ENCODE measurements at regions of chr1 and their contacts with region 1.

Region 1: GRCh38 chr1:235415008-235415904 is 48.0 kb downstream of the TBCE start:
- DNase-seq: peak; percentile 74
- ATAC-seq: peak; percentile 53
- H3K4me3 Mint-ChIP-seq: no peak overlapping the region
- H3K27ac Mint-ChIP-seq: no peak overlapping the region
- H3K4me1 Mint-ChIP-seq: peaks cover 9% of the 10 kb centered on the region
- H3K27me3 Mint-ChIP-seq: no peaks in the 10 kb centered on the region

Region 2: DNA sequence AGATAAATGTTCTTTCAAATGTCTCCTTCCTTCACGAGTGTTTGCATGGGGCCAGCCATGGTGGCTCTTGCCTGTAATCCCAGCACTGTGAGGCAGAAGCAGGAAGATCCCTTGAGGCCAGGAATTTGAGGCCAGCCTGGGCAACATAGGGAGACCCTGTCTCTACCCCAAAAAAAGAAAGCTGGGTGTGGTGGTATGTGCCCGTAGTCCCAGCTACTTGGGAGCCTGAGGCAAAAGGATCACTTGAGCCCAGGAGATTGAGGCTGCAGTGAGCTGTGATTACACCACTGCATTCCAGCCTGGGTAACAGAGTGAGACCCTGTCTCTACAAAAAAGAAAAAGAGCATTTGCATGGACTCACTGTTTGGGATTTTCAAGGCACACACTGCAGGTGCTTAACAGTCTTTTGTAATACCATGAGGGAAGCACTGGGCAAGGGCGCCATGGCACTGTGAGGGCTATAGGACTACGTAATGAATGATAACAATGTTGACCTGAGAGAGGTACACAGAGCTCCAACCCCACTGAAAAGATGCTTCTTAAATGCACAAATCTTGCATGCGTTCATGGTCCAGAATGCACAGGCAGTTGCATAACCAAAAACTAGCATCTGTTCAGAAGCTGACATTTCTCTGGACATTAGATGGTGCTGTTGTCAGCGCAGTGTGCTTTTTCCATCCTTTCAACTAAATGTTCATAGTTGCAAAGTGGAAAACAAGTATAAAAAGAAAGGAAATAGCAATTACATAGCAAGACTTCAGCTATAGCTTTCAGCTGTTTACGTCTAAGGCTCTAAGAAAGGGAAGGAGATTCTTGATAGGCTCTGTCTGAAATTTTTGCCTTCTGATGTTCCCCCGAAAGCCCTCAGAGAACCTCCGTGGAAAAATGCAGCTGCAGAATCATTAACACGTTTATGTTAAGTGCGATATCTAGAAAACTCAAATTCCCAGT is 928.5 kb before region 1 on chr1:
- CTCF ChIA-PET with region 1: interaction called, 12 read pairs
- POLR2A ChIA-PET with region 1: no interaction called
- DNase-seq: peak; percentile 59
- ATAC-seq: peak; percentile 66
- H3K4me3 Mint-ChIP-seq: no peak overlapping the region
- H3K27ac Mint-ChIP-seq: no peak overlapping the region
- H3K4me1 Mint-ChIP-seq: peaks cover 31% of the 10 kb centered on the region
- H3K27me3 Mint-ChIP-seq: peaks cover 20% of the 10 kb centered on the region

Region 3: DNA sequence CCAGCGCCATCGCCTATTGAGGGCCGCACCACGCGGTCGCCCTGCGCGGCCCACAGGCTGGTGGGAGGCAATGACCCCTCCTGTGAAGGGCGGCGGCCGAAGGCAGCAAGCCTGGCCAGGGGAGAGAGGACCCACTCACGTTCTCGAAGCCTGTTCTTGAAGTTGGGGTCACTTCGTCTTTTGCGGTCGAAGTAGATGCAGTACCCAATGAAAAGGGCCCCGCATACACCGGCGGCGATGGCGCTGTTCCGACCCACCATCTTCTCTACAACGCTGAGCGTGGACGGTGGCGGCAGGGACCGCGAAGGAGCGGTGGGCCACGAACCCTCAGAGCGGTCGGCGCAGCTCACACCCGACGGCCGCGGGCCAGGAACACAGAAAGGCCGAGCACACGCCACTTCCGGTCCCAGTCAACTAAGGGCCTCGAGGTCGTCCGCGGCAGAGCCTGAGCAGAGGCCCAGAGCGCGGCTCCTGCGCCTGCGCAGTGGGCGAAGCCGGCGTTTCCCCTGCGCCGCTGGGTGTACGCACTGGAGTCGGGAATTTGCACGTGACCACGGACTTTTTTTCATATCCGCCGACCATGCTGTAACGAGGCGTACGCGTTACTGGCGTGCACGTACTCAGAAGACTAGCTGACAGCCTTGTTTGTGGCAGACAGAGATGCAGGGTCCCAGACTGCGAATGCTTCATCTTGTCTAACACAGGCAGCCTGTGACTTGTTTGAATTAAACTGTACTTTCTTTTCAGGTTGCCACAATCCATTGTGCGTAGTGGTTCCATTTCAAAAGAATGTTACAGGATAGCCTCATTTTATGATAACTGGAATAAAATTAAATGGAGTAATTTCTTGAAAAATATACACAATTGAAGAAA is 286.6 kb before region 1 on chr1 and contains the start of gene TOMM20:
- CTCF ChIA-PET with region 1: interaction called, 18 read pairs
- POLR2A ChIA-PET with region 1: no interaction called
- DNase-seq: peak; percentile 95
- ATAC-seq: peak; percentile 97
- H3K4me3 Mint-ChIP-seq: peak within 1 kb of the TSS; percentile 85
- H3K27ac Mint-ChIP-seq: peak within 1 kb of the TSS; percentile 99
- H3K4me1 Mint-ChIP-seq: peaks cover 36% of the 10 kb centered on the region
- H3K27me3 Mint-ChIP-seq: no peaks in the 10 kb centered on the region
- total RNA-seq, gene TOMM20: 72.2 to 81.7 TPM

Region 4: GRCh38 chr1:235199441-235199840 is 215.8 kb before region 1 on chr1:
- CTCF ChIA-PET with region 1: interaction called, 10 read pairs
- POLR2A ChIA-PET with region 1: no interaction called
- DNase-seq: no peak
- ATAC-seq: no peak
- H3K4me3 Mint-ChIP-seq: no peak overlapping the region
- H3K27ac Mint-ChIP-seq: no peak overlapping the region
- H3K4me1 Mint-ChIP-seq: peaks cover 2% of the 10 kb centered on the region
- H3K27me3 Mint-ChIP-seq: no peaks in the 10 kb centered on the region

Region 5: DNA sequence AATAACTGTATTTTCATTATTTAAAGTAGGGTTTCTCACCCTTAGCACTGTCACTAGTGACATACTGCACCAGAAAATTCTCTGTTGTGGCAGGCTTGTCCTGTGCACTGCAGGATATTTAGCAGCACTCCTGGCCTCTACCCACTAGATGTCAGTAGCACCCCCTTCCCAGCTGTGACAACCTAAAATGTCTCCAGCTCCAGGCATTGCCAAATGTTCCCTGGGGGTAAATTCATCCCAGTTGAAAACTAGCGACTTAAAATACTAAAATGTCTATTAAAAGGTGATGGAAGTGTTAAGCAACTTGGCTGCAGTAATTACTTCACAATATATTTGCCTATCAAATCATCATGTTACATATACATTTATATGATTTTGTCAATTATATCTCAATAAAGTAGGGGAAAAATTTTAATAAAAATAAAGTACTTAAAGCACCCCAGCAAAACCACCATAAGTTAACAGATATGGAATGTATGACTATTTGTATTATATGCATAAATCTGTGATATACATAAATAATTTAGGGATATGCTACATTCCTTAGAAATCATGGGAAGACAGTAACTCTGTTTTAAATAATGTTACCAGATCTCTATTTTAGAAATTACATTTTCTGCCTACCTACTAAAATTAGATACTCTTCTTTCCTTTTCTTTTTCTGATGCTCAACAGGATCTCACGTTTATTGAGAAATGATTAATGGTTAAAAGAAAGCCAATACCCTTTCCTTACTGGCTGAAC is 161.9 kb before region 1 on chr1:
- CTCF ChIA-PET with region 1: interaction called, 35 read pairs
- POLR2A ChIA-PET with region 1: no interaction called
- DNase-seq: peak; percentile 71
- ATAC-seq: peak; percentile 97
- H3K4me3 Mint-ChIP-seq: no peak overlapping the region
- H3K27ac Mint-ChIP-seq: no peak overlapping the region
- H3K4me1 Mint-ChIP-seq: peaks cover 23% of the 10 kb centered on the region
- H3K27me3 Mint-ChIP-seq: no peaks in the 10 kb centered on the region

Region 6: DNA sequence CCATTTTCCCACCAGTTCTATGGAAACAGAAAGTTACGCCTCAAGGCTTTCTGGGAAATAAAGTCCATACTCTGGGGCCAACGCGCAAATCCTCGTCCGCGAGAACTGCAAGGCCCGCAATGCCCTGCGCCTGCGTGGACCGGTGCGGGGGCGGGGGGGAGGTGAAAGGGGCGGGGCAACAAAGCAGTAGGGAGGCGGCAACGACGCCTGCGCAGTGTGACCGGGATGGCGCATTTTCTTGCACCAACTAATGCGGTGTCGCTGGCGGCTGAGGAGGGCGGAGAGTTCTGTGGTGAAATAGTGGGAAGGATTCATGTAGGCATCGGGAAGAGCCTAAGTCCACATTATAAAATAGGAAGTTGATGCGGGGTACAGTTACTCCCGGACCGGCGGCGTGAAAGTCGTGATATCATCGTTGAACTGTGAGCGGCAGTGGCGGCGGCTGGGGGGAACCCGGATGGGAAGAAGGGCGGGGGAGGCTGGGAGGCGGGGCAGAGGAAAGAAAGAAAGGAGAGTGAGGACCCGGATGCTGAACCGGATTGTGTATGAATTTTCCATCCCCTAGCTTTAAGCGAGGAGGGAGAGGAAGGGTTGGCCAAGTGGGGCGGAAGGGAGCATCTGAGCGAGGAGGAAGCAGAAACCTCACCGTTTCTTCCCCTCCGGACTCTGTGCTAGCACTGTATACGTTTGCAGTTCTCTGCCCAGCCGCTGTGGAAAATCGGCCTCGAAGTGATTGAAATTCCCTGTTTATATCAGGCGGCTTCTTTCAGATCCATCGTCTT is 86.7 kb before region 1 on chr1 and contains the start of gene GGPS1:
- CTCF ChIA-PET with region 1: interaction called, 12 read pairs
- POLR2A ChIA-PET with region 1: no interaction called
- DNase-seq: peak; percentile 99
- ATAC-seq: peak; percentile 84
- H3K4me3 Mint-ChIP-seq: no peak within 1 kb of the TSS
- H3K27ac Mint-ChIP-seq: no peak within 1 kb of the TSS
- H3K4me1 Mint-ChIP-seq: peaks cover 25% of the 10 kb centered on the region
- H3K27me3 Mint-ChIP-seq: no peaks in the 10 kb centered on the region
- total RNA-seq, gene GGPS1: 24.5 to 25.9 TPM

Region 7: DNA sequence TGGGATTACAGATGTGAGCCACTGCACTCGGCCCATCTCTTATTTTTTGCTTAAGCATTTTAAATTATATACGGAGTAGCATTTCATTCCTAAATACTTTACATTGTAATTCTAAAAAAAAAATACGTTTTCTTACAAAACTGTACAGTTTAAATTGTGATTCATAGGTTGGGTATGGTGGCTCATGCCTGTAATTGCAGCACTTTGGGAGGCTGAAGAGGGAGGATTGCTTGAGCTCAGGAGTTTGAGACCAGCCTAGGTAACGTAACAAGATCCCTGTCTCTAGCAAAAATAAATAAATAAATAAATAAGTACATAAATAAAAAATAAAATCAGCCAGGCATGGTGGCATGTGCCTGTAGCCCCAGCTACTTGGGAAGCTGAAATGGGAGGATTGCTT is 23.4 kb before region 1 on chr1:
- CTCF ChIA-PET with region 1: interaction called, 13 read pairs
- POLR2A ChIA-PET with region 1: no interaction called
- DNase-seq: no peak
- ATAC-seq: no peak
- H3K4me3 Mint-ChIP-seq: no peak overlapping the region
- H3K27ac Mint-ChIP-seq: no peak overlapping the region
- H3K4me1 Mint-ChIP-seq: no peaks in the 10 kb centered on the region
- H3K27me3 Mint-ChIP-seq: no peaks in the 10 kb centered on the region

Region 8: DNA sequence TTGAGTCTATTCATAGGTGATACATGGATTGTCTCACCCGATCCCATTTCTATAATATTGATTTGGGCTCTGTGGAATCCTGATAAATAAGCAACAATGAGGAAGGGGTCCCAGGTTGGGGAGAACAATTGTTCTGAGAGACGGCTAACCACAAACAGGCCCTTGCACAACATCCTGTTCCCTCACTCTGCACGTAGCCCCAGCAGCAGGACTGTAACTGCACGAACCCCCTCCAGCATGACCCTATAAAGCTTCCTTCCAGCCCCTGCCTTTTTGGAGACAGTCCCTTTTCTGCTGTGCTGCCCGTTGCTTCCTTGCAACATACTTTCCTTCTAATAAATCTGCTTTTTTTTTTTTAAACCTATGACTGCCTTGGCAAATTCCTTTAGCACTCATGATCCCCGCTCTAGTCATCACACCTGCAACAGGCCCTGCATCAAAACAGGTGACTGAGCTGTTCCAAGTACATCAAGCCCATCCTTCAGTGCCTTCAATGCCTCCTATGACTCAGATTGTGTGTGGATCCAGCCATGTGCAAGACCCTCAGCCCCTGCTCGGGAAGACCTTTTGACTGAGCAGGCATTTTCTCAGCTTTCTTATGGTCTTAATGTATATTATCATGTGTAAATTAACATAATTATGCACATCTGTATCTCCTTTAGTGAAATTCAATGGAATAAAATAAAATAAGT is 152.7 kb after region 1 on chr1:
- CTCF ChIA-PET with region 1: no interaction called
- POLR2A ChIA-PET with region 1: no interaction called
- DNase-seq: peak; percentile 59
- ATAC-seq: peak; percentile 83
- H3K4me3 Mint-ChIP-seq: no peak overlapping the region
- H3K27ac Mint-ChIP-seq: peak overlapping the region; percentile 56
- H3K4me1 Mint-ChIP-seq: peaks cover 15% of the 10 kb centered on the region
- H3K27me3 Mint-ChIP-seq: peaks cover 5% of the 10 kb centered on the region

Measured in activated CD8-positive, alpha-beta T cell treated with anti-CD3 and anti-CD28 coated beads, Interleukin-2, amount 10 ng/mL, durations not matched to agents 7 days and 5 days (primary cell).